AG04450 (cell line): ENCODE measurements at regions of chrX and their contacts with region 1.

Region 1: DNA sequence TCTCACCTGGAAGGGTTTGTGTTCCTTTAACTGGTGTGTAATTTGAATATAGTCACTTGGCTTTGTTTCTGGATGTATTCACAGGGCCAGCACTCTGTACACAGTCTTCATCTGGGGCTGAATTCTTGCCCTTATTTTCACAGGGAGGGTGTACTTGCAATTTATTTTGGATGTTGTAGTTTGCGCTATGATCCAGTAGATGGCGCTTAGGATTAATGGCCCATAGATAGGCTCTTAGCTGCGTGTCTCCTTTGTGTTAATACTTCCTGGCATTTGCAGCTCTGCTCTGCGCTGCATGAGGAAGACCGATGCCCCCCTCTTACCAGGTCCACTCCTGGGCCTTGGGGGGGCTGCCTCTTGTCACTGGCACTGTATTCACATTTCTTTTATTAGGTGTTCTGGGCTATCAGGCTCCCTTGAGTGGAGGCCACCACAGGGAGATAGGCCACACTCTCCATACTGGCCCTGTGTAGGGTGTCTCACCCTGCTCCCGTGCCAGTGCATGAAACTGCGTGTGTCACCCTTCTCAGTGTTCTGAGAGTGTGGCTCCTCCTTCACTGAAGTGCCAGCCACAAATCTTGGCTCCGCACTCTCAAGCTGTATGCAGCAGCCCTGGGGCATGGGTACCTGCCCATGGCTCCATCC is 562.2 kb downstream of the ZIC3 start:
- DNase-seq: no peak
- H3K4me3 ChIP-seq: no peak overlapping the region
- H3K27ac ChIP-seq: no peak overlapping the region
- H3K27me3 ChIP-seq: no peaks in the 10 kb centered on the region
- CTCF ChIP-seq: peak; percentile 41

Region 2: DNA sequence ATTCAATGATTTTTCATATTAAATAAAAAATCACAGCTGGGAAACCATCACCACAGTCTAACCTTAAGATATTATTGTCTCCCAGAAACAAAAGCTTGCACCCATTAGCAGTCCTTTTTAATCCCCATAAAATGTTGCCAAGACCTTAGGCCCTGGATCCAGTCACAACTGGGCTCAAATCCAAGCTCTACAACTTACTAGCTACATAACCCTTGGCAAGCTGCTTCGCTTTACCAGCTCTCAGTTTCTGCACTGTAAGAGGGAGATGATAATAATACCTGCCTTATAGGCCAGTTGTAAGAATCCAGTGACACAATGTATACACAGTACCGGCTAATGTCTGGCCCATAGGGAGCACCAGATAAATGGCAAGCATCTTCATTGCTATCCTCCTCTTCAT is 984.3 kb after region 1 on chrX:
- CTCF ChIA-PET with region 1: interaction called, 10 read pairs
- POLR2A ChIA-PET with region 1: no interaction called
- DNase-seq: no peak
- H3K4me3 ChIP-seq: no peak overlapping the region
- H3K27ac ChIP-seq: no peak overlapping the region
- H3K27me3 ChIP-seq: no peaks in the 10 kb centered on the region
- CTCF ChIP-seq: no peak